Testis (tissue), 5 donors: ENCODE measurements at regions of chr2 and their contacts with region 1.

Region 1: GRCh38 chr2:147538088-147538487 is 306.7 kb upstream of the ACVR2A start:
- DNase-seq: no peak
- H3K4me3 ChIP-seq: no peak overlapping the region
- H3K27ac ChIP-seq: no peak overlapping the region
- H3K4me1 ChIP-seq: no peaks in the 10 kb centered on the region
- H3K27me3 ChIP-seq: no peaks in the 10 kb centered on the region
- CTCF ChIP-seq: no peak
- POLR2A ChIP-seq: no peak

Region 2: GRCh38 chr2:147847746-147848391 is 309.8 kb after region 1 on chr2:
- intact Hi-C with region 1: no loop called
- DNase-seq: no peak
- H3K4me3 ChIP-seq: no peak overlapping the region
- H3K27ac ChIP-seq: no peak overlapping the region
- H3K4me1 ChIP-seq: peaks cover 21% of the 10 kb centered on the region
- H3K27me3 ChIP-seq: no peaks in the 10 kb centered on the region
- CTCF ChIP-seq: no peak
- POLR2A ChIP-seq: no peak

Region 3: GRCh38 chr2:147989809-147990403 is 451.8 kb after region 1 on chr2:
- intact Hi-C with region 1: loop called (anchors 10 kb)
- DNase-seq: peak; percentile 36
- H3K4me3 ChIP-seq: no peak overlapping the region
- H3K27ac ChIP-seq: no peak overlapping the region
- H3K4me1 ChIP-seq: no peaks in the 10 kb centered on the region
- H3K27me3 ChIP-seq: no peaks in the 10 kb centered on the region
- CTCF ChIP-seq: peak; percentile 51 to 56 (median 55)
- POLR2A ChIP-seq: no peak

Region 4: GRCh38 chr2:148209603-148210002 is 671.5 kb after region 1 on chr2:
- intact Hi-C with region 1: no loop called
- DNase-seq: no peak
- H3K4me3 ChIP-seq: no peak overlapping the region
- H3K27ac ChIP-seq: no peak overlapping the region
- H3K4me1 ChIP-seq: no peaks in the 10 kb centered on the region
- H3K27me3 ChIP-seq: no peaks in the 10 kb centered on the region
- CTCF ChIP-seq: no peak
- POLR2A ChIP-seq: no peak